Natural killer cell (primary cell): ENCODE measurements at regions of chr11 and their contacts with region 1.

Region 1: DNA sequence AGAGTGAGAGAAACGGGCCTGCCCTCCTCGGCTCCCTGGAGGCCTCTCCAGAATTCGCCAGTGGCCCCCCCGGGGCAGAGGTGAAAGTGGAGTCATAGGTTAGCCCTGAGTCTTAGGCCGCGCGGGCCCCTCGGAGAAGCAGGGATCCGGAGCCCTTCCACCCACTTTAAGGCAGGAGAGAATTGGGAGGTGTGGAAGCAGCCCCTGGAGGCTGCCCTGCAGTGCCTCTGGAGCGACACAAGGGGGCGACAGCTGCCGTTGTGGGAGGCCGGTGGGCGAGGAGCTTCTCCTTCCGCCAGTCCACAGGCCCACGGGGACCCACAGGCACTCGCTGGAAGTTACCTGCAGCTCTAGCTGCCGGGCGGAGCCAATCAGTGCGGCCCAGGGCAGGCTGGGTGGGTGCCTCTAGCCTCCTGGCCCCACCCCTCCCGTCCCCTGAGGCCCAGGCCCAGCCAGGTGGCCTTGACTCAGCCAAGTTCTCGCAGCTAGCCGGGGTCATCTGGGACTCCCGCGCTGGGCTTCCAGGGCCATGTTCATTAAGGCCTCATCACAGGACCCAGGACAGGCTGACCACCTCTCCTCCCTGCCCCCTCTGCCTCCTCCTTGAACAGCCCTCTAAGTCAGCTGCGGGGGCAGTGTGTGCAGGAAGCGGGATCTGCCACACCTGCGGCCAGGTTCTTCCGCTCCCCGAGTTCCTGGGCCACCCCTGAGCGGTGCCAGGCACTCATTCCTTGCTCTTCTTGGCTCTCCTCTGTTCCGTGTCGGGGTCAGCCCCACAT is 5.0 kb downstream of the DGKZ start:
- DNase-seq: peak; percentile 68 to 92
- ATAC-seq: peak; percentile 22 to 35 (median 25)
- H3K4me3 ChIP-seq: peak overlapping the region; percentile 11
- H3K4me3 Mint-ChIP-seq: peak overlapping the region; percentile 78
- H3K27ac ChIP-seq: peak overlapping the region; percentile 41
- H3K27ac Mint-ChIP-seq: peak overlapping the region; percentile 84 to 87
- H3K4me1 ChIP-seq: peaks cover 89% of the 10 kb centered on the region
- H3K4me1 Mint-ChIP-seq: peaks cover 73 to 82% of the 10 kb centered on the region in 2 donors
- H3K27me3 ChIP-seq: no peaks in the 10 kb centered on the region
- H3K27me3 Mint-ChIP-seq: no peaks in the 10 kb centered on the region
- CTCF ChIP-seq: peak; percentile 99

Region 2: DNA sequence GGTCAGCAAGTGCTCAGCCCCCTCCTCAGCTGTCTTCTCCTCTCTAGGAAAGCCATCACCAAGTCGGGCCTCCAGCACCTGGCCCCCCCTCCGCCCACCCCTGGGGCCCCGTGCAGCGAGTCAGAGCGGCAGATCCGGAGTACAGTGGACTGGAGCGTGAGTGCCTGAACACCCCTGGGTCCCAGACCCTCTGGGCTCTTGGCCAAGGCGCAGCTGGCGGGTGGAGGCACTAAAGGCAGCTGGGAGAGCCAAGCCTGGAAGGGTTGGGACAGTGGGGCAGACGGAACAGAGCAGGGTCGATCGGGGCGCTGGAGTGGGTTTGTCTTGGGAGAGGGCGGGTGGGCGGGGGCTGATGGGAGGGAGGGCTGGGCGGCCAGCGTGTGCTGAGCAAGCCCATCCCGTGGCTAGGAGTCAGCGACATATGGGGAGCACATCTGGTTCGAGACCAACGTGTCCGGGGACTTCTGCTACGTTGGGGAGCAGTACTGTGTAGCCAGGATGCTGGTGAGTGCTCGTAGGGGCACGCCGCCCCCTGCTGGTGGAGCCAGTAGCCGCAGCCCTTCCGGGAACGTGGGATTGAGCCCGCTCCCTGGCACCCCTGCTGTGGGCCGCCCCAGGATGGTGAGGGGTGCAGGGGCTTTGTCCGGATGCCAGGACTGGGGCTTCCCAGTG is 15.1 kb after region 1 on chr11:
- intact Hi-C with region 1: loop called (anchors 1 kb)
- DNase-seq: peak; percentile 76 to 88
- ATAC-seq: peak; percentile 80 to 87 (median 83)
- H3K4me3 ChIP-seq: no peak overlapping the region
- H3K4me3 Mint-ChIP-seq: peak overlapping the region; percentile 6
- H3K27ac ChIP-seq: no peak overlapping the region
- H3K27ac Mint-ChIP-seq: peak overlapping the region; percentile 23 to 57
- H3K4me1 ChIP-seq: peaks cover 57% of the 10 kb centered on the region
- H3K4me1 Mint-ChIP-seq: peaks cover 33 to 61% of the 10 kb centered on the region in 2 donors
- H3K27me3 ChIP-seq: no peaks in the 10 kb centered on the region
- H3K27me3 Mint-ChIP-seq: no peaks in the 10 kb centered on the region
- CTCF ChIP-seq: peak; percentile 98